ENCODE measurements at regions of chr2 and their contacts with region 1.

Region 1: DNA sequence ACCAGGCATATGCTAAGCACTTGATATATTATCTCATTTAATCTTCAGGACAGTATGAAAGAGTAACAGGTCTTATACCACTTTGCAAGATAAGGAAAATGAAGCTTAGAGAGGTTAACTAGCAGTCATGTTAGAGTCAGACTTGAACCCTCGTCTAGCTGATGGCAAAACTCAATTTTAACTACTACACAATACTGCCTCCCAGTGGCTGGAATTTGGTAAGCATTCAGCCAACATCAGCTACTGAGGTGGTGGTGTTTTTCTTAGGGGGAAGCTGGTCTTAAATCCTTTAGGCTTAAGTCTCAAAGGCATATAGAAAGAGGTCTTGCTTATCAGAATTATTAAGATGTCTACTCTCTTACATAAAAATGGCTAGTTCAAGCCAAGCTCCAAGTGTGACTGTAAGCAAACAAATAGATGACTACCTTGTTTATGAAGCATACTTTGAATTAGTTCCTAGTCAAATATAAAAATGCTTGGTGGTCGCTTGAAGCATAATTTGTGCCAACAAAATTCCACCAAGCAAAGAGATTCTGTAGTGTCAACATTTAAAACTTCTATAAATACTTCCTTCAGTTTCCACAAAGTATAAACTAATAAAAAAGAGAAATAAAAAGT is 325.4 kb upstream of the FIGN start:
- DNase-seq: no peak
- ATAC-seq: peak; percentile 29

Region 2: GRCh38 chr2:163345908-163346573 is 715.2 kb before region 1 on chr2:
- intact Hi-C with region 1: loop called (anchors 5 kb)
- DNase-seq: no peak
- ATAC-seq: no peak

Region 3: DNA sequence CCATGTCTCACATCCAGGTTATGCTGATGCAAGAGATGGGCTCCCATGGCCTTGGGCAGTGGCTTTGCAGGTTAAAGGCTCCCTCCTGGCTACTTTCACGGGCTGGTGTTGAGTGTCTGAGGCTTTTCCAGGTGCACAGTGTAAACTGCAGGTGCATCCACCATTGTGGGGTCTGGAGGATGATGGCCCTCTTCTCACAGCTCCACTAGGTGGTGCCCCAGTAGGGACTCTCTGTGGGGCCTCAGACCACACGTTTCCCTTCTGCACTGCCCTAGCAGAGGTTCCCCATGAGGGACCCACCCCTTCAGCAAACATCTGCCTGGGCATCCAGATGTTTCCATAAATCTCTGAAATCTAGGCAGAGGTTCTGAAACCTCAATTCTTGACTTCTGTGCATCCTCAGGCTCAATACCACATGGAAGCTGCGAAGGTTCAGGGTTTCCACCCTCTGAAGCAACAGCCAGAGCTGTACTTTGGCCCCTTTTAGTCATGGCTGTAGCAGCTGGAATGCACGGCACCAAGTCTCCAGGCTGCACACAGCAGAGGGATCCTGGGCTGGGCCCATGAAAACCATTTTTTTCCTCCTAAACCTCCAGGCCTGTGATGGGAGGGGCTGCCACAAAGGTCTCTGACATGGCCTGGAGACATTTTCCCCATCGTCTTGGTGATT is 232.6 kb before region 1 on chr2:
- intact Hi-C with region 1: no loop called
- DNase-seq: no peak
- ATAC-seq: no peak

Region 4: GRCh38 chr2:163906410-163906809 is 154.8 kb before region 1 on chr2:
- intact Hi-C with region 1: no loop called
- DNase-seq: no peak
- ATAC-seq: no peak

Measured in left ventricle myocardium superior (tissue), 1 donor.